Activated CD4-positive, alpha-beta T cell treated with anti-CD3 and anti-CD28 coated beads for 36 hours (primary cell): ENCODE measurements at regions of chr10 and their contacts with region 1.

Region 1: GRCh38 chr10:102503281-102504220 is at the start of gene SUFU:
- DNase-seq: peak; percentile 99
- ATAC-seq: peak; percentile 78
- H3K4me3 Mint-ChIP-seq: no peak within 1 kb of the TSS
- H3K27ac Mint-ChIP-seq: peak within 1 kb of the TSS; percentile 82
- H3K4me1 Mint-ChIP-seq: peaks cover 28% of the 10 kb centered on the region
- H3K27me3 Mint-ChIP-seq: no peaks in the 10 kb centered on the region
- total RNA-seq, gene SUFU: 8.4 to 9.5 TPM

Region 2: DNA sequence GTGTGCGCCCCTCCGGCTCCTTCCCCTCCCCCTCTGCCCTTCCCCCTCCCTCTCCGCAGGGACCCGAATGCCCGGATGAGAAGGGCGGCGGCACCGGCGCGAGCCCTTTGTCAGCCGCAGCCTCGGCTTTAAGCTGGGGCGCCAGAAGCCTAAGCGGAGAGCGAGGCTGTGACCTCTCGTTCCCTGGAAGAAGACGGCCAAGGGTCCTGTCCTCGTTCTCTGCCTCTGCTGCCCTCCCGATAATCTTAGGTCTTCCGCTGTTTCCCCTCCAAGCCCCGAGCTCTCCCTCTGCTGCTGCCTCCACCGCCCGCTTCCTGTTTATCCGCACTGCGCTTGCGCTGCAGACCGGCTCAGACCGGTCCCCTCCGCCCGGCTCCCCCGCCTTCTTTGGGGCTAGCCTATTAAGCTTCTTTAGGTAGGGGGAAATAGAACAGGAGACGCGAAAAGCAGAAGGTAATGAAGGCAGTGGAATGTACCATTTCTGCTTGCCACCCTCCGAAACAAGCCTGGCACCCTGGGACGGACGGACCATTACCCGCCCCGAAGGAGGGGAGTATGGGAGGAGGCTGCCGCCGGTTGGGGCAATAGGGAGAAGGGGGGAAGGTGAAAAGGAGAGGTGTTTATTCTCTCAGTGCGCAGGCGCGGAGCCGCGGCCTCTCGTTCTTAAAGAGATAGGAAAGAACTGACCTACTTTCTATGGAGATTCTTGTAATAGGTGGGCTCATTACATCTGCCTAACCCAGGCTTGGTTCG is 685.3 kb before region 1 on chr10 and contains the start of gene OGA:
- CTCF ChIA-PET with region 1: no interaction called
- POLR2A ChIA-PET with region 1: no interaction called
- intact Hi-C with region 1: loop called in 1 of 2 experiments (anchors 1 kb)
- DNase-seq: peak; percentile 99
- ATAC-seq: peak; percentile 89
- H3K4me3 Mint-ChIP-seq: peak within 1 kb of the TSS; percentile 89
- H3K27ac Mint-ChIP-seq: peak within 1 kb of the TSS; percentile 83
- H3K4me1 Mint-ChIP-seq: peaks cover 40% of the 10 kb centered on the region
- H3K27me3 Mint-ChIP-seq: no peaks in the 10 kb centered on the region
- total RNA-seq, gene OGA: 113 to 124 TPM

Region 3: GRCh38 chr10:102151774-102152544 is 351.6 kb before region 1 on chr10 and contains the start of gene NOLC1:
- CTCF ChIA-PET with region 1: interaction called, 6 read pairs
- POLR2A ChIA-PET with region 1: interaction called, 3 read pairs
- intact Hi-C with region 1: loop called (anchors 1 to 2 kb)
- DNase-seq: peak; percentile 100
- ATAC-seq: peak; percentile 92
- H3K4me3 Mint-ChIP-seq: peak within 1 kb of the TSS; percentile 99
- H3K27ac Mint-ChIP-seq: peak within 1 kb of the TSS; percentile 99
- H3K4me1 Mint-ChIP-seq: peaks cover 49% of the 10 kb centered on the region
- H3K27me3 Mint-ChIP-seq: no peaks in the 10 kb centered on the region
- total RNA-seq, gene NOLC1: 206 to 283 TPM

Region 4: DNA sequence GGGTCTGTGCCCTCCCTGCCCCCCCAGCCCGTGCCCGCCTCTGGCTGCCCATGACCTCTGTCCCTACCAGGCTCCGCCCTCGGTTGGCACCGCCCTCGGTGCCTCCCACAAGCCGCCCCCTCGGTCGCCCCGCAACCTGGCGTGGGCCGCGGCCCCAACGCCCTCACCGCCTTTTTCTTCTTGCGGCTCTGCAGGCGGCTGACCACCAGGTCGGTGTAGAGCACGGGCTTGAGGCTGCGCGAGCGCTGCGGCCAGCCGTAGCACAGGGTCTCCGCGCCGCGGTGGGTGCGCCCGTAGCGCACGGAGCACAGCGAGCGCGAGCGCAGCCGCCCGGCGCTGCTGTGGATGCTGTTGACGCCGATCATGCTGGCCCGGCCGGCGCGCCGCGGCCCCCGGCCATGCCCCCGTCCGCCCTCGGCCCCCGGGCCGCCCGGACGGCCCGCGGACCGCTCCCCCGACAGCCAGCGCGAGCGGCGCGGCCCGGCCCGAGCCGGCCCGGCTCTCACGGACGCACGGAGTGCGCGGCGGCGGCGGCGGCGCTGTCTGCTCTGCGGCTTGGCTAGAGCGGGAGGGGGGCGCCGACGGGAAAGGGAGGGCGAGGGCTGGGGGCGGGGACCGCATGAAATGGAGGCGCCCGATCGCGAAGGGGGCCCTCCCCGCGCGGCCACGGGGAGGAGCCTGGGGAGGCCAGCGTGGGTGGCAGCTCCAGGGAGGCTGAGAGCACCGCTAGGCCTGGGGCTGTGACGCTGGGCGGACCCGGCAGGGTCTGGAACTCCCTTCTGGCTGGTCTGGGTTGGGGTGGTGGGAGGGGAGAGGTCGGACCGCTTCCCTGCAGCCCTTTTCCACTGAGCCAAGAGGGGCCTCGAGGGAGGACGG is 94.6 kb before region 1 on chr10:
- CTCF ChIA-PET with region 1: no interaction called
- POLR2A ChIA-PET with region 1: no interaction called
- intact Hi-C with region 1: loop called in 1 of 2 experiments (anchors 1 kb)
- DNase-seq: peak; percentile 91
- ATAC-seq: peak; percentile 69
- H3K4me3 Mint-ChIP-seq: peak overlapping the region; percentile 71
- H3K27ac Mint-ChIP-seq: peak overlapping the region; percentile 73
- H3K4me1 Mint-ChIP-seq: peaks cover 35% of the 10 kb centered on the region
- H3K27me3 Mint-ChIP-seq: peaks cover 14% of the 10 kb centered on the region

Region 5: GRCh38 chr10:102461187-102462054 is 42.1 kb before region 1 on chr10:
- CTCF ChIA-PET with region 1: interaction called, 4 read pairs
- POLR2A ChIA-PET with region 1: no interaction called
- intact Hi-C with region 1: loop called (anchors 1 to 2 kb)
- DNase-seq: peak; percentile 97
- ATAC-seq: peak; percentile 98
- H3K4me3 Mint-ChIP-seq: peak overlapping the region; percentile 85
- H3K27ac Mint-ChIP-seq: peak overlapping the region; percentile 73
- H3K4me1 Mint-ChIP-seq: peaks cover 27% of the 10 kb centered on the region
- H3K27me3 Mint-ChIP-seq: no peaks in the 10 kb centered on the region

Region 6: GRCh38 chr10:102743588-102744373 is 240.2 kb after region 1 on chr10 and contains the start of gene WBP1L:
- CTCF ChIA-PET with region 1: interaction called, 4 read pairs
- POLR2A ChIA-PET with region 1: no interaction called
- intact Hi-C with region 1: loop called (anchors 1 kb)
- DNase-seq: peak; percentile 96
- ATAC-seq: peak; percentile 98
- H3K4me3 Mint-ChIP-seq: peak within 1 kb of the TSS; percentile 92
- H3K27ac Mint-ChIP-seq: peak within 1 kb of the TSS; percentile 82
- H3K4me1 Mint-ChIP-seq: peaks cover 42% of the 10 kb centered on the region
- H3K27me3 Mint-ChIP-seq: no peaks in the 10 kb centered on the region
- total RNA-seq, gene WBP1L: 14.9 to 16.4 TPM

Region 7: GRCh38 chr10:103367782-103368518 is 864.4 kb after region 1 on chr10 and contains the start of gene TAF5:
- CTCF ChIA-PET with region 1: no interaction called
- POLR2A ChIA-PET with region 1: no interaction called
- intact Hi-C with region 1: loop called in 1 of 2 experiments (anchors 1 kb)
- DNase-seq: peak; percentile 95
- ATAC-seq: peak; percentile 61
- H3K4me3 Mint-ChIP-seq: peak within 1 kb of the TSS; percentile 81
- H3K27ac Mint-ChIP-seq: peak within 1 kb of the TSS; percentile 85
- H3K4me1 Mint-ChIP-seq: peaks cover 16% of the 10 kb centered on the region
- H3K27me3 Mint-ChIP-seq: no peaks in the 10 kb centered on the region
- total RNA-seq, gene TAF5: 11.2 to 11.4 TPM